ENCODE measurements at regions of chr2 and their contacts with region 1.

Region 1: GRCh38 chr2:195559431-195559914 is 97.6 kb upstream of the SLC39A10 start:
- DNase-seq: peak; percentile 14 to 93 (median 90)
- ATAC-seq: peak; percentile 94
- H3K4me3 ChIP-seq: peak overlapping the region; percentile 33
- H3K4me3 Mint-ChIP-seq: peak overlapping the region; percentile 61 to 89 (median 76)
- H3K27ac ChIP-seq: peak overlapping the region; percentile 71
- H3K27ac Mint-ChIP-seq: peak overlapping the region; percentile 84 to 99 (median 94)
- H3K4me1 ChIP-seq: peaks cover 58 to 74% of the 10 kb centered on the region in 2 donors
- H3K4me1 Mint-ChIP-seq: peaks cover 43 to 78% (median 69%) of the 10 kb centered on the region in 7 donors
- H3K27me3 ChIP-seq: no peaks in the 10 kb centered on the region
- H3K27me3 Mint-ChIP-seq: no peaks in the 10 kb centered on the region

Region 2: GRCh38 chr2:195428673-195429072 is 130.8 kb before region 1 on chr2:
- CTCF ChIA-PET with region 1: no interaction called
- POLR2A ChIA-PET with region 1: no interaction called
- intact Hi-C with region 1: no loop called
- DNase-seq: no peak
- ATAC-seq: no peak
- H3K4me3 ChIP-seq: no peak overlapping the region
- H3K4me3 Mint-ChIP-seq: no peak overlapping the region
- H3K27ac ChIP-seq: no peak overlapping the region
- H3K27ac Mint-ChIP-seq: no peak overlapping the region
- H3K4me1 ChIP-seq: no peaks in the 10 kb centered on the region
- H3K4me1 Mint-ChIP-seq: peaks cover 0 to 12% (median 0%) of the 10 kb centered on the region in 7 donors
- H3K27me3 ChIP-seq: no peaks in the 10 kb centered on the region
- H3K27me3 Mint-ChIP-seq: no peaks in the 10 kb centered on the region

Region 3: DNA sequence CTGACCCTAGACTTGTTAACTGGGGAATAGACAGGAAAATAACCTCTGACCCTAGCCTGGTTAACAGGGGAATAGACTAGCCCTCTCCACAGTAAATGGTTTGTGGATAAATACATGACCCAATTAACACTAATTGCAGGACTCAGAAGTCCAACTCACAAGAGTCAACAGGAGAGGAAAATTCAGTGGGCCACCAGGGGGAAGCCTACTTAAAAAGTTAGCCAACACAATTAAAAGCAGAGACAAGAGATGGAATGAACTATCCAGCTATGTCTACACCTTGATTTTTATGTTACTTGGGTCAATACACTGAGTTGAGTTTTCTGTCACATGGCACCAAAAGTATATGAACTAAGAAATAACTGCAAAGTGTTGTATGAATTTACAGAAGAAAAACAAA is 61.3 kb before region 1 on chr2:
- CTCF ChIA-PET with region 1: no interaction called
- POLR2A ChIA-PET with region 1: interaction called, 9 read pairs
- intact Hi-C with region 1: loop called in 1 of 2 experiments (anchors 1 kb)
- DNase-seq: peak in 7 of 9 donors; percentile 25 to 60 (median 47)
- ATAC-seq: peak; percentile 68
- H3K4me3 ChIP-seq: no peak overlapping the region
- H3K4me3 Mint-ChIP-seq: peak overlapping the region in 4 of 10 donors; percentile 20 to 60 (median 32)
- H3K27ac ChIP-seq: no peak overlapping the region
- H3K27ac Mint-ChIP-seq: peak overlapping the region in 7 of 9 donors; percentile 14 to 88 (median 63)
- H3K4me1 ChIP-seq: peaks cover 0 to 19% of the 10 kb centered on the region in 2 donors
- H3K4me1 Mint-ChIP-seq: peaks cover 12 to 81% (median 54%) of the 10 kb centered on the region in 7 donors
- H3K27me3 ChIP-seq: no peaks in the 10 kb centered on the region
- H3K27me3 Mint-ChIP-seq: no peaks in the 10 kb centered on the region

Region 4: DNA sequence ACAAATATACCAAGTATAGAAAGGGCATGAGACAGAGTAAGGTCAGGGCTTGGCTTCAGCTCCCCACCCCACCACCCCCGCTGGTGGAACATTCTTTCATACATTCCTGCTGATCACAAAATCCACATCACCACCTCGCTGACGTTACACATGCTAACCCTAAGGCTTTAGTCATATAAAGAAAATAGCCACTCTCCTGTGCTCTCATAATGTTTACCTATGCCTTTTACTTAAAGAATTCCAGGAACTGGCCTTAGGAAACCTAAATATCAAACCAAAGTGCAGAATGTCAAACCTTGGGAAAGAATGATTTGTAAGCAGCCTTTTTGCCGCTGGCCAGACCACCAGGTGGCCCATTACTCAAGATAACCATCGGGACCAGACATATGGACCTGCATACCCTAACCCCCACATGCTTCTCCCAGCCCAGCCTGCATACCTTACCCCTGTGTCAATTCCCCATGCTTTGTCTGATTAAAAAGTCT is 38.8 kb before region 1 on chr2:
- CTCF ChIA-PET with region 1: no interaction called
- POLR2A ChIA-PET with region 1: no interaction called
- intact Hi-C with region 1: no loop called
- DNase-seq: no peak
- ATAC-seq: no peak
- H3K4me3 ChIP-seq: no peak overlapping the region
- H3K4me3 Mint-ChIP-seq: peak overlapping the region in 1 of 10 donors; percentile 16
- H3K27ac ChIP-seq: no peak overlapping the region
- H3K27ac Mint-ChIP-seq: peak overlapping the region in 3 of 9 donors; percentile 14 to 83 (median 63)
- H3K4me1 ChIP-seq: no peaks in the 10 kb centered on the region
- H3K4me1 Mint-ChIP-seq: peaks cover 17 to 65% (median 34%) of the 10 kb centered on the region in 7 donors
- H3K27me3 ChIP-seq: no peaks in the 10 kb centered on the region
- H3K27me3 Mint-ChIP-seq: no peaks in the 10 kb centered on the region

Region 5: GRCh38 chr2:195543902-195544894 is 15.3 kb before region 1 on chr2:
- CTCF ChIA-PET with region 1: interaction called, 4 read pairs
- POLR2A ChIA-PET with region 1: interaction called, 293 read pairs
- intact Hi-C with region 1: loop called (anchors 1 kb)
- DNase-seq: no peak
- ATAC-seq: peak; percentile 41
- H3K4me3 ChIP-seq: no peak overlapping the region
- H3K4me3 Mint-ChIP-seq: peak overlapping the region in 9 of 10 donors; percentile 0 to 70 (median 54)
- H3K27ac ChIP-seq: peak overlapping the region; percentile 52
- H3K27ac Mint-ChIP-seq: peak overlapping the region; percentile 24 to 100 (median 85)
- H3K4me1 ChIP-seq: peaks cover 20 to 27% of the 10 kb centered on the region in 2 donors
- H3K4me1 Mint-ChIP-seq: peaks cover 29 to 80% (median 61%) of the 10 kb centered on the region in 7 donors
- H3K27me3 ChIP-seq: no peaks in the 10 kb centered on the region
- H3K27me3 Mint-ChIP-seq: no peaks in the 10 kb centered on the region

Region 6: GRCh38 chr2:195575879-195576401 is 16.5 kb after region 1 on chr2:
- CTCF ChIA-PET with region 1: interaction called, 8 read pairs
- POLR2A ChIA-PET with region 1: interaction called, 26 read pairs
- intact Hi-C with region 1: loop called in 1 of 2 experiments (anchors 1 kb)
- DNase-seq: peak in 1 of 9 donors; percentile 20
- ATAC-seq: peak; percentile 49
- H3K4me3 ChIP-seq: no peak overlapping the region
- H3K4me3 Mint-ChIP-seq: peak overlapping the region; percentile 14 to 79 (median 63)
- H3K27ac ChIP-seq: peak overlapping the region; percentile 21
- H3K27ac Mint-ChIP-seq: peak overlapping the region; percentile 27 to 94 (median 85)
- H3K4me1 ChIP-seq: peaks cover 15 to 51% of the 10 kb centered on the region in 2 donors
- H3K4me1 Mint-ChIP-seq: peaks cover 38 to 91% (median 82%) of the 10 kb centered on the region in 7 donors
- H3K27me3 ChIP-seq: no peaks in the 10 kb centered on the region
- H3K27me3 Mint-ChIP-seq: no peaks in the 10 kb centered on the region

Region 7: GRCh38 chr2:196205881-196206435 is 646.5 kb after region 1 on chr2:
- CTCF ChIA-PET with region 1: no interaction called
- POLR2A ChIA-PET with region 1: no interaction called
- intact Hi-C with region 1: loop called in 1 of 2 experiments (anchors 1 kb)
- DNase-seq: no peak
- ATAC-seq: no peak
- H3K4me3 ChIP-seq: no peak overlapping the region
- H3K4me3 Mint-ChIP-seq: no peak overlapping the region
- H3K27ac ChIP-seq: no peak overlapping the region
- H3K27ac Mint-ChIP-seq: peak overlapping the region in 7 of 9 donors; percentile 28 to 85 (median 66)
- H3K4me1 ChIP-seq: peaks cover 17 to 31% of the 10 kb centered on the region in 2 donors
- H3K4me1 Mint-ChIP-seq: peaks cover 29 to 75% (median 51%) of the 10 kb centered on the region in 7 donors
- H3K27me3 ChIP-seq: no peaks in the 10 kb centered on the region
- H3K27me3 Mint-ChIP-seq: no peaks in the 10 kb centered on the region